ENCODE measurements at regions of chr2 and their contacts with region 1.

Region 1: GRCh38 chr2:18402-19271 is 27.7 kb downstream of the FAM110C start:
- DNase-seq: peak in 1 of 35 experiments; percentile 21
- ATAC-seq: no peak
- H3K4me3 ChIP-seq: no peak overlapping the region
- H3K4me3 Mint-ChIP-seq: no peak overlapping the region
- H3K27ac ChIP-seq: no peak overlapping the region
- H3K27ac Mint-ChIP-seq: no peak overlapping the region
- H3K4me1 ChIP-seq: peaks cover 0 to 2% of the 10 kb centered on the region in 2 experiments
- H3K4me1 Mint-ChIP-seq: peaks cover 3 to 10% (median 7%) of the 10 kb centered on the region in 3 donors
- H3K27me3 ChIP-seq: peaks cover 0 to 16% of the 10 kb centered on the region in 2 experiments
- H3K27me3 Mint-ChIP-seq: peaks cover 13 to 18% of the 10 kb centered on the region in 2 donors

Region 2: DNA sequence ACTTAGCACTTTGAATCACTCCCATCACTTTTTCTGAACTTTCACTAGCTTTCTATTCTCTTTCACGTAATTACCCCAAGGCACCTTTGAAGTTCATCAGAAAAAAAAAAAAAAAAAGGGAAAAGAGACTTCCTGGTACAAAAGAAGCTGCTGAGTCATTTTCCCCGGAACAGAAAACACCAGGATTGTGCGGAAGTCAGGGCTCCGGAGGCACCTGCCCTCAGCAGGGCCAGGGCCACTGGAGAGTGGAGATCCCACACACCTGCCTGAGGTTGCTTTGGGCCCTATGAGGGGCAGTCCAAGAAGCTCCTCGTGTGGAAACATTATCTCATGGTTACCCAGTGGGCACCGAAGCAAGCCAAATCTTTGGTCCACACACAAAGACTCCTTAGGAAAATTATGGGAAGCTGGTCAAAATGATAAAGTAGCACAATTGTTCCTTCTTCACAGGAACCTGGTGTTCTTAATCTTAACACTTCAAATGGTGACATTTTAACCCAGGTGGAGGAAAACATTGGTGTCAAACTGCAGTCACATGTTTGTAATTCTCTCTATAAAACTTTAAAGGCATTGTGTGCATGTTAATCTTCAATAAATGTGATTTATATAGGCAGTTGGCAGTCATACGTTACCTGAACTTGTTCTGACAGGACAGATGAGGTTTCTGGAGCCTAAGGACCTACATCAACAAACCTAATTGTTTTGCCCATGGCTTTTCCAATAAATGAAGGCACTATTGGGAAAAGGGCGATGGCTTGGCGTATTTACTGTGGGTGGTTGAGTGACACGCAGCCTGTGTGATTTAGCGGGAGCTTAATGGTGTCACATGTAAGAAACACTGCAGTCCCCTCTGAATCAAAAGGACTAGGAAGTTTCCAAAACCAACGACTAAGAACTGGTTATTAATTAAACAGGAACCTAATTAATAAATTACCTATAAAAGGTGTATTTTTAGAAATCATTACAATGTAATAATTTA is 51.0 kb after region 1 on chr2:
- CTCF ChIA-PET with region 1: no interaction called
- POLR2A ChIA-PET with region 1: no interaction called
- DNase-seq: no peak
- ATAC-seq: no peak
- H3K4me3 ChIP-seq: no peak overlapping the region
- H3K4me3 Mint-ChIP-seq: no peak overlapping the region
- H3K27ac ChIP-seq: no peak overlapping the region
- H3K27ac Mint-ChIP-seq: no peak overlapping the region
- H3K4me1 ChIP-seq: no peaks in the 10 kb centered on the region
- H3K4me1 Mint-ChIP-seq: no peaks in the 10 kb centered on the region
- H3K27me3 ChIP-seq: peaks cover 2 to 13% of the 10 kb centered on the region in 2 experiments
- H3K27me3 Mint-ChIP-seq: peaks cover 0 to 9% of the 10 kb centered on the region in 2 donors

Region 3: DNA sequence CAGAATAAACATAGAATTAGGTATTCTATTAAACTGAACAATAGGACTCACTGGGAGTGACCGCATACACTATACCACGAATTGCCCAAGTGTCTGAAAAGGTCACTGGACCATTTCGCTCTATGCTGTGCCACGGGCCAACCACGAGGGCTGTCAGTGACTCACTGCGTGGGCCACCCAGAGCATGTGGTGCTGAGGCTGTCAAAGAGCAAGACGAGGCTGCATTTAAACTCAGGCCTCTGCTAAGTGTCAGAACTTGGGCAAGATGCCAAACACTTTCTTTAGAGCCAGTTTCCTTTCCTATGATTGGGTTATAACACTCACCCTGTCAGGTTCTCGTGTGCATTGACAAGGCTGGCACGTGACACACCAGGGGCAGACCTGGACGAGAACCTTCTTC is 147.7 kb after region 1 on chr2:
- CTCF ChIA-PET with region 1: interaction called in 1 of 2 experiments, 10 read pairs
- POLR2A ChIA-PET with region 1: no interaction called
- DNase-seq: peak in 1 of 35 experiments; percentile 31
- ATAC-seq: peak in 1 of 4 experiments; percentile 53
- H3K4me3 ChIP-seq: no peak overlapping the region
- H3K4me3 Mint-ChIP-seq: no peak overlapping the region
- H3K27ac ChIP-seq: no peak overlapping the region
- H3K27ac Mint-ChIP-seq: peak overlapping the region in 1 of 2 donors; percentile 17
- H3K4me1 ChIP-seq: peaks cover 0 to 8% of the 10 kb centered on the region in 2 experiments
- H3K4me1 Mint-ChIP-seq: peaks cover 9 to 15% (median 13%) of the 10 kb centered on the region in 3 donors
- H3K27me3 ChIP-seq: peaks cover 0 to 10% of the 10 kb centered on the region in 2 experiments
- H3K27me3 Mint-ChIP-seq: peaks cover 7 to 10% of the 10 kb centered on the region in 2 donors

Measured in T-cell (primary cell).